A549 (cell line): ENCODE measurements at regions of chr22 and their contacts with region 1.

Region 1: GRCh38 chr22:42621505-42622002 is 6.9 kb upstream of the POLDIP3 start:
- DNase-seq: peak; percentile 64 to 80
- ATAC-seq: peak; percentile 88 to 94
- H3K4me3 ChIP-seq: no peak overlapping the region
- H3K27ac ChIP-seq: no peak overlapping the region; a peak in 1 of 6 replicates
- H3K4me1 ChIP-seq: peaks cover 10% of the 10 kb centered on the region; the same call in 2 of the 3 replicates
- CTCF ChIP-seq: peak; percentile 78
- EP300 ChIP-seq: no peak
- POLR2A ChIP-seq: no peak
- RAD21 ChIP-seq: peak; percentile 77

Region 2: DNA sequence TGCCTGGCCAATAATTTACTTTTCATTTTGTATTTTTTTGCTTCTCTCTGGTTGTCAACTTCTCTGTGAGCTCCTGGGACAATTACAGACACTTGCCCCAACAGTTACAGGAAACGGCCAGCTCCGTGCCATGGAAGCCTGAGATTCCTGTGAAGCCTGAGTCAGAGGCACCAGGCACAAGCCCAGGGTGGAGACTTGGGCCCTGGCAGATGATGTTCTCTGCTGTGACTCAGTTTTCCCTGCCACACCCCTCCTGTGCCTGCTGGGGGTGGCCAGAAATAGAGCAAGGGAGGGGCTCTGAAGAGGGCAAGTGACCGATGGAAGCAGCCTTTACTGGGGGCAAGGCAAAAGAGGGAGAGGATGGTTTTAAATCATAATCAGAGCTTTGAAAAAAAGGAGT is 14.0 kb after region 1 on chr22:
- CTCF ChIA-PET with region 1: interaction called, 42 read pairs
- POLR2A ChIA-PET with region 1: no interaction called
- DNase-seq: peak; percentile 44 to 71
- ATAC-seq: peak; percentile 86 to 87
- H3K4me3 ChIP-seq: no peak overlapping the region
- H3K27ac ChIP-seq: peak overlapping the region; percentile 72 to 73
- H3K4me1 ChIP-seq: peaks cover 17% of the 10 kb centered on the region
- CTCF ChIP-seq: no peak
- EP300 ChIP-seq: no peak
- POLR2A ChIP-seq: no peak
- RAD21 ChIP-seq: no peak

Region 3: DNA sequence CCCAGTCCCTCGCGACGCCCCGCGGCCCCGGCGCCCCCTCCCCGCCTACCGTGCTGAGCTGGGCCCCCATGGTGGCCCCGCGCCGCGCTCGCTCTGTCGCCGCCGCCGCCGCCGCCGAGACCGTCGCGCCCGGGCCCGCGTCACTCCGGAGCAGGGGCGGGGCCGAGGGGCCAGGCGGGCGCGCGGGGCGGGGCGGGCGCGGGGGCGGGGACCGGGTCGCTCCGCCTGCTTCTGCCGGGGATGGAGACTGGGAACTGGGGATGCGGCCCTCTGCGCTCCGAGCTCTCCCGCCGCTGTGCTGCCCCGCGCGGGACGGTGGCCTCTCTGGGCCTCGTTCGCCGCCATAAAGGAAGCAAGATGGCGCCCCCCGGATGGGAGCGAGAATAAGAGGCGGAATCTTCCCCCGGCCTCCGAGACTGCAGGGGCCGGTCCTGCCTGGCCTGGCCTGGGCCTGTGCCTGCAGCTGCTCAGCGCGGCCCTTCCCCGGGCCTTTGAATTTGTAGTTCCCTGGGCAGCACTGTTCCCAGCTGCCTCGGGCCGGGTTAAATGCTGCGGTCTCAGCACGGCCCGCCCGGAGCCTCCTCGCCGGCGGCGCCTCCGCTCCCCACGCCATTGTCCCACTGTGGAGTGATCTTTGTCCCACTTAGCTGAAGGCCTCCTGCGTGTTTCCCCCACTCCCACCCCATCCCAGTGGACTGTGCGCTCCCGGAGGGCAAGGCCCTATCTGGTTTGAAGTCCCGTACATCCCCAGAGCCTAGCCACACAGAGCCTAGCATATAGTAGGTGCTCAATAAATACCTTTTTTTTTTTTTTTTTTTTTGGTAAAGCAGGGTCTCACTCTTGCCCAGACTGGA is 27.9 kb after region 1 on chr22 and contains the start of gene CYB5R3:
- CTCF ChIA-PET with region 1: interaction called, 29 read pairs
- POLR2A ChIA-PET with region 1: interaction called, 5 read pairs
- DNase-seq: peak; percentile 65 to 83
- ATAC-seq: peak; percentile 87 to 91
- H3K4me3 ChIP-seq: peak within 1 kb of the TSS; percentile 85
- H3K27ac ChIP-seq: peak within 1 kb of the TSS; percentile 96 to 97
- H3K4me1 ChIP-seq: peaks cover 37% of the 10 kb centered on the region
- CTCF ChIP-seq: no peak
- EP300 ChIP-seq: no peak
- POLR2A ChIP-seq: no peak; the same call in 1 of the 2 replicates
- RAD21 ChIP-seq: no peak; a peak in 1 of 5 replicates
- polyA plus RNA-seq, gene CYB5R3: 30.8 and 39.4 TPM in 2 replicates

Region 4: DNA sequence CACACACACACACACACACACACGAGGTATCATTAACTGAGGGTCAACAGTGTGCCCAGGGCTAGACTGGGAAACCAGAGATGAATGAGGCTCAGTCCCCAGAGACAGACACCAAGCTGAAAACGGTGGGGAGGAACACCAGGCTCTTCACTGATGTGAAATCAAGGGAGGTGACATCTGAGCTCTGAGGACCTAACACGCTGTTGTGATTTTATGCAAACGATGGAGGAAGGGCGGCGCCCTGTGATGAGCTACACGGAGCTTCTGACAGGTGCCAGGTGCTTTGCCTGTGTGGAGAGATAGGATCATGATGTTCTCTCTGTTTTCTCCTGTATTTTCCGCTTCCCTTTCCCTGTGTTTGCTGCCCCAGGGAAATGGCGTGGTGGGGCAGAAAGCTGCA is 34.1 kb after region 1 on chr22:
- CTCF ChIA-PET with region 1: interaction called, 29 read pairs
- POLR2A ChIA-PET with region 1: no interaction called
- DNase-seq: no peak
- ATAC-seq: no peak
- H3K4me3 ChIP-seq: no peak overlapping the region
- H3K27ac ChIP-seq: no peak overlapping the region
- H3K4me1 ChIP-seq: peaks cover 7% of the 10 kb centered on the region
- CTCF ChIP-seq: no peak
- EP300 ChIP-seq: no peak
- POLR2A ChIP-seq: no peak
- RAD21 ChIP-seq: no peak

Region 5: GRCh38 chr22:42662114-42663021 is 40.8 kb after region 1 on chr22:
- CTCF ChIA-PET with region 1: interaction called, 15 read pairs
- POLR2A ChIA-PET with region 1: no interaction called
- DNase-seq: peak; percentile 68 to 78
- ATAC-seq: peak; percentile 95
- H3K4me3 ChIP-seq: peak overlapping the region; percentile 71
- H3K27ac ChIP-seq: peak overlapping the region; percentile 89 to 90
- H3K4me1 ChIP-seq: no peaks in the 10 kb centered on the region
- CTCF ChIP-seq: peak; percentile 73
- EP300 ChIP-seq: no peak
- POLR2A ChIP-seq: no peak
- RAD21 ChIP-seq: peak; percentile 66 to 89